ENCODE measurements at regions of chr10 and their contacts with region 1.

Region 1: GRCh38 chr10:12129222-12130111 is at the start of gene SEC61A2:
- DNase-seq: peak; percentile 98
- ATAC-seq: peak; percentile 89
- H3K4me3 ChIP-seq: peak within 1 kb of the TSS; percentile 74 to 91 (median 85)
- H3K4me3 Mint-ChIP-seq: peak within 1 kb of the TSS; percentile 95
- H3K27ac ChIP-seq: peak within 1 kb of the TSS; percentile 92
- H3K27ac Mint-ChIP-seq: peak within 1 kb of the TSS; percentile 91
- H3K4me1 ChIP-seq: peaks cover 9 to 16% of the 10 kb centered on the region in 2 donors
- H3K4me1 Mint-ChIP-seq: peaks cover 15% of the 10 kb centered on the region
- H3K27me3 ChIP-seq: no peaks in the 10 kb centered on the region
- H3K27me3 Mint-ChIP-seq: no peaks in the 10 kb centered on the region
- CTCF ChIP-seq: no peak
- total RNA-seq, gene SEC61A2: 20.2 and 22.8 TPM in 2 replicates

Region 2: DNA sequence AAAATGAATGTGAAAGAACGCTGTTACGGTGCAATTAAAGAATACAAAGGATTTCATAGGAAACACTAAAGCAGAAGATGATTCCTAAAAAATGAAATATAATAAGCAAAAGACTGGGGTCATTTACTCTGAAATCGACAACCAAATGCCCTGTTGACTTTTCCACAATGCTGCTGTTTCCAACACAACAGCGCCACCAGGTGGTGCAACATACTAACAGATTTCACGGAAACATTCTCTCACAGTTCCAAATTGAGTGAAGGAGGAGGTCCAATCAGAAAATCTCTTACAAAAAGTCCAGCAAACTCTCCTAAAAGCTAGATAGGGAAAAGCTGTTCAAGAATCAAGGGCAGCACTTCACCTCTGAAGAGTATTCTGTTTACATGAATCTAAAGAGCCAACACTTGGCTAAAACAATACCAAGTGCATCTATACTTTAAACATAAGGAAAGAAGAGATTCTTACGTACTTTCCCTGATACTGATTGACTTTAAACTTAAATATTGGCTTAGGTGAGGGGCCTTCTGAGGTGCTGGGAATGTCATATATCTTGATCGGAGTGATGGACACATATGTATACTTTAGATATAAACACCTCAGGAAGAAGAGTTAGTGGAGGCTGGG is 142.8 kb before region 1 on chr10:
- CTCF ChIA-PET with region 1: interaction called, 4 read pairs
- POLR2A ChIA-PET with region 1: no interaction called
- intact Hi-C with region 1: loop called (anchors 5 kb)
- DNase-seq: peak; percentile 79
- ATAC-seq: peak; percentile 53
- H3K4me3 ChIP-seq: no peak overlapping the region
- H3K4me3 Mint-ChIP-seq: no peak overlapping the region
- H3K27ac ChIP-seq: peak overlapping the region in 1 of 2 donors; percentile 4
- H3K27ac Mint-ChIP-seq: no peak overlapping the region
- H3K4me1 ChIP-seq: peaks cover 6 to 11% of the 10 kb centered on the region in 2 donors
- H3K4me1 Mint-ChIP-seq: peaks cover 23% of the 10 kb centered on the region
- H3K27me3 ChIP-seq: no peaks in the 10 kb centered on the region
- H3K27me3 Mint-ChIP-seq: no peaks in the 10 kb centered on the region
- CTCF ChIP-seq: peak; percentile 96

Region 3: DNA sequence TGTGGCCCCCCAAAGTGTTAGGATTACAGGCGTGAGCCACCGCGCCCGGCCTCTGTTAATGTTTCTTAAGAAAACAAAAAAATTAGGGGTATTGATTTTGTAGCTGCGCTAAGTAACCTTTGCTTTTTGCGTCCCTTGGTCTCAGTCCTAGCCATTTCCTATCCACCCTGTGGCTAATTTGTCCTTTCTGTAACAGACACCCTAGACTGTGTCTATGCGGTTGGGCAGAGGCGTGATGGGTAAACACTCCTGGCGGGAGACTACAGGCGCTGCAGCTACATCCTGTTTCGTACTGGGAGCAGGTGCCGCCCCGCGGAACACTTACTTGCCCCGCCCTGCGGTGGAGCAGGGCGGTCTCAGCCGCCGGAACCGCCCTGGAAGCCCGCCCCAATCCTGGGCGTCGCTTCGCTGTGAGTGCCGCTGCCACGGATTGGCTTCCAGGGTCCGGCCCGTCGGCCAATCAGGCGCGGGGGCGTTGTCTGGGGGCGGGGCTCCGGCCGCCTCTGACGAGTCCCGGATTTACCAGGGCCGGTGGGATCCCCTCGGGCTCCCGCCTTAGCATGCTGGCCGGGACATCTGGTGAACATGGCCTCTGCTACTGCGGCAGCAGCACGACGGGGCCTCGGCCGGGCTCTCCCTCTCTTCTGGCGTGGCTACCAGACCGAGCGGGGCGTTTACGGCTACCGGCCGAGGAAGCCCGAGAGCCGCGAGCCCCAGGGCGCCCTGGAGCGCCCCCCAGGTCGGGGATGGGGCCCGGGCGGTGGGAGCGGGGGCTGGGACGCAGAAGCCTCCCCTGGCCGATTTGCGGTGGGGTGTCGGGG is 60.8 kb before region 1 on chr10 and contains the start of gene DHTKD1:
- CTCF ChIA-PET with region 1: interaction called, 3 read pairs
- POLR2A ChIA-PET with region 1: no interaction called
- intact Hi-C with region 1: loop called (anchors 1 kb)
- DNase-seq: peak; percentile 98
- ATAC-seq: peak; percentile 98
- H3K4me3 ChIP-seq: peak within 1 kb of the TSS; percentile 92 to 98 (median 96)
- H3K4me3 Mint-ChIP-seq: peak within 1 kb of the TSS; percentile 88
- H3K27ac ChIP-seq: peak within 1 kb of the TSS; percentile 80 to 91
- H3K27ac Mint-ChIP-seq: peak within 1 kb of the TSS; percentile 95
- H3K4me1 ChIP-seq: peaks cover 27 to 33% of the 10 kb centered on the region in 2 donors
- H3K4me1 Mint-ChIP-seq: peaks cover 41% of the 10 kb centered on the region
- H3K27me3 ChIP-seq: no peaks in the 10 kb centered on the region
- H3K27me3 Mint-ChIP-seq: no peaks in the 10 kb centered on the region
- CTCF ChIP-seq: peak; percentile 44
- total RNA-seq, gene DHTKD1: 72.3 and 77.0 TPM in 2 replicates

Region 4: DNA sequence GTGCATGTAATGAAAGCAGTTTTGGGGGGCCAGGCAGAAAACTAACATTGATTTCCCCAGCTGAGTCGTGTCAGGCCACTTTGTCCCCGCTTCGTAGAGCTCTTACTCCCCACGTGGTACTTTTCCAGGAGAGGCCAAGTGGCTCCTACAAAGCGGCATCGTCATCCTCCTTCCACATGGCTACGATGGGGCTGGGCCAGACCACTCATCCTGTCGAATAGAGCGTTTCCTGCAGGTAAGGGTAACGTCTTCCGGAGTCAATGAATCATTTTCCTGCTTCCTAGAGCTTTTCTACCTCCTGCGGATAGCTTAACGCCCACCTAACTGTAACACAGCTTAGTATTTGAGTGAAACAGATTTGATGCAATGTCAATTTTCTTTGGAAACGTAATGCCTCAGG is 21.7 kb before region 1 on chr10:
- CTCF ChIA-PET with region 1: interaction called, 3 read pairs
- POLR2A ChIA-PET with region 1: interaction called, 3 read pairs
- intact Hi-C with region 1: loop called (anchors 1 kb)
- DNase-seq: no peak
- ATAC-seq: no peak
- H3K4me3 ChIP-seq: no peak overlapping the region
- H3K4me3 Mint-ChIP-seq: no peak overlapping the region
- H3K27ac ChIP-seq: no peak overlapping the region
- H3K27ac Mint-ChIP-seq: no peak overlapping the region
- H3K4me1 ChIP-seq: peaks cover 14% of the 10 kb centered on the region in 2 donors
- H3K4me1 Mint-ChIP-seq: peaks cover 14% of the 10 kb centered on the region
- H3K27me3 ChIP-seq: no peaks in the 10 kb centered on the region
- H3K27me3 Mint-ChIP-seq: no peaks in the 10 kb centered on the region
- CTCF ChIP-seq: no peak

Region 5: GRCh38 chr10:12195603-12196506 is 66.4 kb after region 1 on chr10 and contains the starts of genes CDC123 and NUDT5:
- CTCF ChIA-PET with region 1: interaction called, 5 read pairs
- POLR2A ChIA-PET with region 1: no interaction called
- intact Hi-C with region 1: loop called (anchors 1 kb)
- DNase-seq: peak; percentile 93
- ATAC-seq: peak; percentile 90
- H3K4me3 ChIP-seq: peak within 1 kb of the TSS; percentile 87 to 97 (median 95)
- H3K4me3 Mint-ChIP-seq: peak within 1 kb of the TSS; percentile 93
- H3K27ac ChIP-seq: peak within 1 kb of the TSS; percentile 91 to 94
- H3K27ac Mint-ChIP-seq: peak within 1 kb of the TSS; percentile 99
- H3K4me1 ChIP-seq: peaks cover 18 to 24% of the 10 kb centered on the region in 2 donors
- H3K4me1 Mint-ChIP-seq: peaks cover 42% of the 10 kb centered on the region
- H3K27me3 ChIP-seq: no peaks in the 10 kb centered on the region
- H3K27me3 Mint-ChIP-seq: no peaks in the 10 kb centered on the region
- CTCF ChIP-seq: no peak
- total RNA-seq, gene CDC123: 56.0 and 62.0 TPM in 2 replicates
- total RNA-seq, gene NUDT5: 39.1 and 39.9 TPM in 2 replicates